ENCODE measurements at regions of chr6 and their contacts with region 1.

Region 1: DNA sequence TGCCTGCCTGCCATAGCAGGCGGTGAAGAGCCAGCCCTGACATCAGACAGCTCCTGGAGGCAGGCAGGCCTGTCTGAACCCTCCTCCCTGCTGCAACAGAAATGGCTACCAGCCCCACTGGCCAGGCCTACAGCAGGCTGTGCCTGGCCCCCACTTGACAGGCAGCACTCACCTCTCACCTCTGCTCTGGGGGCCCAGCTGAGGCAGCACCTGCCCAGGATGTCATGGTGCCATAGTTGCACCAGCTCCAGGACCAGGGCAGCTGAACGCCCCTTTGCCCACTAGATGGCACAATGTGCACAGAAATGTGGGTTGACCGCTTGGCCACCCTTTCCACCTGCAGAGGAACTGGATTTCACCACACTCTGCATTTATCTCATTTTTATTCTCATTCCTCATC is 30.6 kb downstream of the MRPL14 start:
- DNase-seq: peak; percentile 77
- ATAC-seq: peak; percentile 56
- H3K4me3 ChIP-seq: no peak overlapping the region
- H3K27ac ChIP-seq: no peak overlapping the region
- H3K4me1 ChIP-seq: peaks cover 95% of the 10 kb centered on the region
- H3K27me3 ChIP-seq: no peaks in the 10 kb centered on the region
- CTCF ChIP-seq: peak; percentile 99
- EP300 ChIP-seq: no peak
- POLR2A ChIP-seq: 0 out of 4 replicates have a peak, but pooled peaks of 1 of the 2 experiments have one; percentile 35
- RAD21 ChIP-seq: peak; percentile 97

Region 2: DNA sequence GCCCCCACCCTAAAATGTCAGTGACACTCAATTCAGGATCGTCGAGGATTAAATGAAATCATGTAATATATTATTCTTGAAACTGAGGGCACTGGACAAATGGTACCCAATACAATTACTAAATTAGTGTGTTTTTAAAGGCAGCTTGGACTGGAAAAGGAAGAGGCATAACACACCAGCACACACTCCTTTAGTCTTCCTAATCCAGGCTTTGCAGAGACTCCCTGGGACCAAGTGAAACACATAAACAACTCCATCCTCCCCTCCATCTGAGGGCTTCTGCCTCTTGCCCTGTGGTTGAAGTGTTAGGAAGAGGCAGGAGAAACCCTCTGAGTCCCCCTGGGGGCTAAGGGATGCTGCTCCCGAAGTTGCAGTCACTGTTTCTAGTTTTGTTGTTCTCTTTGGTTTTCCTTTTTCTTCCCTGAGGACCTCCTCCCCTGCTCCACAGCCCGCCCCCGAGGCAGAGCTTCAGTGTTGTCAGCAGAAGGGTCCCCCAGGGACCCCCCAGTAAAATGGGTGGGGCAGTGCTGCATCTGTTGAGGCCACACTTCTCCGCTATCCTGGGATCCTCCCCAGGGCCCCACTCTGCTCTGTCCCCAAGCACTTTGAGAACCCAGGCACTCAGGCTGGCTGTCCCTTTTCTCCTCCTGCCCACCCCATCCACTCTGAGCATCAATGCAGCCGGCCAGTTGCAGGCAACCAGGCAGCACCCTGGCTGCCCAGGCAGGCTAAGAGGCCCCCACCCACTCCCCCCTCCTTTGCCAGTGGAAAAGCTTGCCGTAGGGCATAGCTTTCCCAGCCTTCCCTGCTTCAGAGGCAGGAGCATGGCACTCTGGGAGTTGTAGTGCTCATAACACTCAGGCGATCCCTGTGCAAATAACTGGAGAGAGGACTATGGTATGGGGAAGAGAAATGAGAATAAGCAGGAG is 36.7 kb after region 1 on chr6:
- CTCF ChIA-PET with region 1: interaction called, 4 read pairs
- POLR2A ChIA-PET with region 1: interaction called, 5 read pairs
- in situ Hi-C with region 1: no loop called
- intact Hi-C with region 1: loop called (anchors 5 kb)
- DNase-seq: peak; percentile 68
- ATAC-seq: peak; percentile 92
- H3K4me3 ChIP-seq: no peak overlapping the region
- H3K27ac ChIP-seq: peak overlapping the region; percentile 4
- H3K4me1 ChIP-seq: peaks cover 57% of the 10 kb centered on the region
- H3K27me3 ChIP-seq: no peaks in the 10 kb centered on the region
- CTCF ChIP-seq: no peak
- EP300 ChIP-seq: no peak
- POLR2A ChIP-seq: no peak
- RAD21 ChIP-seq: no peak

Region 3: DNA sequence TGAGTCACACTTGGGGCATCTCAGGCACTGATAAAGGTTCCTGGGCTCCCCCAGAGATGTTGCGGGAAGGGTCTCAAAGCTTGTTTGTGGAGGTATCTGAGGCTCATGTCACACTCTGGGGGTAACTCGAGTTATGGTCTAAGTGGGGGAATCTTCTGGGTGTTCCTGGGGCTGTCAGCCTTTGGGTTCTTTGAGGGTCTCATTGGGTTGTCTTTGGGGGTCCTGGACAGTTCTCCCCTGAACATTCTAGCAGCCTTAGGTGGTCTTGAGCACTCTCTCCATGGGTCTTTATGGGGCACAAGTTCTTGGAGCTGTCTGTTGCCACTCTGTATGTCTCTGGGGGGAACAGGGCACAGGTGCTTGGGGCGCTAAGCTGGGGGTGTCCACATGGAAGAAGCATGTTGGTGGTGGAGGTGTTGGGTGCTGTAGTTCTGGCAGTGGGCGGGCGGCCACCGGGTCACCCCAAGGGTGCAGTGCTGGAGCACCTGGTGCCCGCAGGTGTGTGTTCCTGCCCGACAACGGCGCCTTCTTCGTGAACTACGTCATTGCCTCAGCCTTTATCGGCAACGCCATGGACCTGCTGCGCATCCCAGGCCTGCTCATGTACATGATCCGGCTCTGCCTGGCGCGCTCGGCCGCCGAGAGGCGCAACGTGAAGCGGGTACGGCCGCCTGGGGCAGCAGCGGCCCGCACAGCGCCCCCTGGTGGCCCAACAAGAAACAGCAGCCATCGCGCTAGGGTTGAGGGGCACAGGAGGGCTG is 54.9 kb after region 1 on chr6:
- CTCF ChIA-PET with region 1: interaction called, 74 read pairs
- POLR2A ChIA-PET with region 1: interaction called, 16 read pairs
- in situ Hi-C with region 1: loop called (anchors 5 kb)
- intact Hi-C with region 1: loop called (anchors 1 kb)
- DNase-seq: peak; percentile 39
- ATAC-seq: peak; percentile 60
- H3K4me3 ChIP-seq: no peak overlapping the region
- H3K27ac ChIP-seq: no peak overlapping the region
- H3K4me1 ChIP-seq: peaks cover 30% of the 10 kb centered on the region
- H3K27me3 ChIP-seq: no peaks in the 10 kb centered on the region
- CTCF ChIP-seq: peak; percentile 100
- EP300 ChIP-seq: no peak
- POLR2A ChIP-seq: no peak
- RAD21 ChIP-seq: peak; percentile 99

Region 4: DNA sequence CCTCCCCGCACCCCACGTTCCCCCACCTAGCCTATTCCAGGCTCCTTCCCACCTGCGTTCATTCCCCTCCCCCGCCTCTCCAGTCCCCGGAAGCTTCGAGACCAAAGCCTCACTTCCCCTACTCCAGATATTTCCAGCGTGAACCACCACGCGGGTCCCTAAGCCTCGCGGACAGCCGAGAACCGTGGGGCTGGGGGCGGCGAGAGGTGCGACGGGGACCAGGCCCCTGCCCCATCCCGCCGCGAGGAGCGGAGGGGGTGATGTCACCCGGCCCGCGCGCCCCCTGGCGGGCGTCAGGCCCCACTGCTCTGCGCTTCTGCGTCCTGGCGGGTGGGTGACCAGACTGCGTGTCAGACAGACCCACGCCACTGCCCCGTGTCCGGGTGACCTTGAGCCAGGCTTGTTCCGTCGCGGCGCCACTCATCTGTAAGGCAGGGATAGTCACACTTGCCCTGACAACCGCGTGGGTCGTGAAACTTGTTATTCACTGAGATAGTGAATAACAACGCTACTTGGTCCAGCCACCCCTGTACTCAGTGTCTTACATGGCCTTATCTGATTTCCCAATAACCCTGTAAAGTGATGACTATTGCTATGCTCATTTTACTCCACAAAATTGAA is 141.3 kb after region 1 on chr6:
- CTCF ChIA-PET with region 1: interaction called, 36 read pairs
- POLR2A ChIA-PET with region 1: interaction called, 7 read pairs
- in situ Hi-C with region 1: loop called (anchors 5 kb)
- intact Hi-C with region 1: loop called (anchors 2 kb)
- DNase-seq: peak; percentile 51
- ATAC-seq: peak; percentile 82
- H3K4me3 ChIP-seq: peak overlapping the region; percentile 53 to 78 (median 60); a peak in 5 of 6 replicates
- H3K27ac ChIP-seq: peak overlapping the region; percentile 57
- H3K4me1 ChIP-seq: peaks cover 69% of the 10 kb centered on the region
- H3K27me3 ChIP-seq: no peaks in the 10 kb centered on the region
- CTCF ChIP-seq: peak; percentile 95
- EP300 ChIP-seq: no peak
- POLR2A ChIP-seq: no peak
- RAD21 ChIP-seq: peak; percentile 85

Region 5: GRCh38 chr6:44338228-44339122 is 241.9 kb after region 1 on chr6:
- CTCF ChIA-PET with region 1: no interaction called
- POLR2A ChIA-PET with region 1: no interaction called
- in situ Hi-C with region 1: no loop called
- intact Hi-C with region 1: loop called (anchors 10 kb)
- DNase-seq: peak; percentile 72
- ATAC-seq: peak; percentile 89
- H3K4me3 ChIP-seq: no peak overlapping the region
- H3K27ac ChIP-seq: no peak overlapping the region
- H3K4me1 ChIP-seq: no peaks in the 10 kb centered on the region
- H3K27me3 ChIP-seq: peaks cover 0 to 56% of the 10 kb centered on the region in 2 experiments; a peak in 4 of 5 replicates
- CTCF ChIP-seq: peak; percentile 94
- EP300 ChIP-seq: no peak
- POLR2A ChIP-seq: no peak
- RAD21 ChIP-seq: peak; percentile 87